ENCODE measurements at regions of chr15 and their contacts with region 1.

Region 1: DNA sequence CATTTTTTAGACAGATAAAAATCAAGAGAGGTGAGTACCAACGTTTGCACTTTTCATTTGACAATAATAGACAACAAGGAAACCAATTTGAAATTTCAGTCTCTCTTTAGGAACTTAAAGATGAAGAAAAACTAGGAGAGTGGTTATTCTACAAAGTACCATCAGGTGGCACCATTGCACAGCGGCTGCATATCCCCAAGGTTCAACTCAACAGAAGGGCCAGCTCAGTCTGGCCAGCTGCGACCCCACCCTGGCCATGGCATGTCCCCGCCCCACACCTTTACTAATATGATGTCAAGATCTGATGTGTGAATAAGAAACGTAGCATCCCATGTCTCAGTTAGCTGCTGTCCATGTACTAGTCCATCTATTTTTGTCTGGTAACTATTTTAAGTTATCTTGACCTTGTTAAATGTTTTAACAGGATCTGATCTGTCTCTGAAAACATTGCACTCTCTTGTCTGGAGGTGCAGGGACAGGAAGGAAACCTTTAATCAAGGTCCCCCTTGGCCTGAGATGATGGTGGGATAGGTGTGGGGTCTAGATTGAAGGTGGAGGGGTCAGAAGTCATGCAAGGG is 35.5 kb upstream of the CGNL1 start:
- DNase-seq: peak; percentile 71 to 77
- H3K4me3 ChIP-seq: no peak overlapping the region
- H3K4me1 ChIP-seq: no peaks in the 10 kb centered on the region
- H3K27me3 ChIP-seq: no peaks in the 10 kb centered on the region

Region 2: DNA sequence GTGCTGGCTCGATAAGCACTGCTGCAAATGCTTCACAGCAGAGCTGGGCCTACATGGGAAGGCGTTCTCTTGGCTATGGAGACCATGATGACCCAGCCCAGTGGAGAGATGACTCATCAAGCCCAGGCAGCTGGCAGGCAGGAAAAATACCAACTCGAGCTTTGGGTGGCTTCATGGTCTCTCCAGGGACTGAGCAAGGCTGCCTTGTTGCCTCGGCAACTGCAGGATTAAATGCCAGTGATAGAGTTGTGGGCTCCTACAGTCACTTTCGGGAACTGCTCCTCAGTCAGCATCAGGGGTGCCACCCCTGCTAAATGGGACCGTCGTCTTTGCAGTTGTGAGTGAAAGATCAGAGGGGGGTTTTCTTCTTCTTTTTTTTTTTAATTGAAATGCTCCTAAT is 196.3 kb after region 1 on chr15:
- in situ Hi-C with region 1: loop called (anchors 5 kb)
- DNase-seq: no peak
- H3K4me3 ChIP-seq: no peak overlapping the region
- H3K4me1 ChIP-seq: no peaks in the 10 kb centered on the region
- H3K27me3 ChIP-seq: no peaks in the 10 kb centered on the region

Measured in HAP-1 (cell line).